Ovary (tissue), 10 donors: ENCODE measurements at regions of chr4 and their contacts with region 1.

Region 1: DNA sequence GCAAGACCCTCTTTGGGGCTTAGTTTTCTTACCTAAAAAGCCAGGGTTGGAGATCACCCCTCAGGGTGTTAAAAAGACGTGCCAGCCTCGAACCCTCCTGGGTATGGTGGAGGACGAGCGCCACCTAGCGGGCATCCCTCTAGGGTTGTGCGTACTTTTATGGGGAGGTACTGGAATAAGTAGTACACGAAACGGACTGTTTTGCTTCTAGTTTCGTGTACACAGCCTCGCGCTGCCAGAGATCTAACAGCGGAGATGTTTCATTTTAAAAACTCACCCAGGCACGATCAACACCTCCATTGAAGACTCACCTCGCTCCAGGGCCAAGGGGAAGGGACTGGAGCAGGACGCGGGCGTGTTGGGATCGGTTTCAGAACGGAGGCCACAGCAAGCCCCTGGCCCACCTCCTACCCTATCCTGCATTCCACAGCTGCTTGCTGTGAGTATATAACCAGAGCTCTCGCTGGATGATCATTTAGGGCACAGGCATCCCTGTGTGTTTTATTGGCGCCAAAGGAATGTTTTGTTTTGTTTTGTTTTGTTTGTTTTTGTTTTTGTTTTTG is 4.8 kb upstream of the NKX3-2 start:
- DNase-seq: peak; percentile 61 to 82 (median 72)
- H3K4me3 ChIP-seq: peak overlapping the region; percentile 15
- H3K27ac ChIP-seq: no peak overlapping the region
- H3K4me1 ChIP-seq: peaks cover 3% of the 10 kb centered on the region
- H3K27me3 ChIP-seq: peaks cover 4% of the 10 kb centered on the region
- CTCF ChIP-seq: peak; percentile 18 to 45 (median 42)
- EP300 ChIP-seq: no peak
- POLR2A ChIP-seq: no peak

Region 2: GRCh38 chr4:12852338-12853307 is 696.4 kb before region 1 on chr4:
- intact Hi-C with region 1: loop called in 2 of 4 experiments (anchors 5 to 10 kb)
- DNase-seq: no peak
- H3K4me3 ChIP-seq: no peak overlapping the region
- H3K27ac ChIP-seq: no peak overlapping the region
- H3K4me1 ChIP-seq: no peaks in the 10 kb centered on the region
- H3K27me3 ChIP-seq: peaks cover 3% of the 10 kb centered on the region
- CTCF ChIP-seq: peak in 1 of 3 donors; percentile 41
- EP300 ChIP-seq: no peak
- POLR2A ChIP-seq: no peak

Region 3: DNA sequence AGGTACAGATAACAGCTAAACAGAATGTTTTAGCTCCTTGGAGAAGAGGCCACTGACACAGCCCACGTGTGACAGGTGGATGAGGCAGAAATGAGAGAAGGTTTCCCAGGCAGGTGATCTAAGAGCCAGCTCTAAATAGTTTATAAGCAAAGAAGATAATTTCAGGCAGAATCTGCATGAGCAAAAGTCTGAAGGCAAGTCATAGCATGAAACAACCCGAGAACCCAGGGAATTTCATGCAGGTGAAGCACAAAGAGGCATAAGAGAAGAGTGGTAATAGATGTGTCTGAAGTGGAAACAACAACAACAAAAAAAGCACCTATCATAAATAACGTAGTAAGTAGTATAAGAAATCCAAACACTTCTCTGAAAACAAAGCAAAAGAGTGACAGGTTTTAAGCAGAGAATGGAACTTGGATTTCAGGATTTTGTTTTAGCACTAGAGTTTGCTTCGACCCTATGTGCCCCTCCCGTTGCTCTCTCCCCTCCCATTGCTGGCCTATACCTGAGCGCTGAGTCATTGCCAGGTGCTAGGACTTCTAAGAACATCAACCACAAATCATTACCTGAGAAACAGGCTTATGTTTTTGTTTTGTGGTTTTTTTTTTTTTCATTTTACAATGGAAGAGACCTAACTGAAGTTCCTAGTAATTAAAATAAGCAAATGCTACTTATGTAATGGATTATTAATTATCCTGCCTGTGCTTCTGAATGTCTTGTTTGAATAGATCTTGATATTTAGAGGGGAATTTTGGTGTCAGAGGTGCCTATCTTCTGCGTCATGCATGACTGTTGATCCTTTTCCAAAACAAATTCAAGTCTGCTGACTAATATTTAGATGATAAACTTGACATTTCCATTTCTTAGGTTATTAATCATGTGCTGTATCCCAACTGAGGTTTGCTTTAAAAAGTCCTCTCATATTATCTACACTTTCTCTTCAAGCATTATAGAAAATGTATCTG is 1177.7 kb after region 1 on chr4:
- intact Hi-C with region 1: no loop called
- DNase-seq: no peak
- H3K4me3 ChIP-seq: no peak overlapping the region
- H3K27ac ChIP-seq: no peak overlapping the region
- H3K4me1 ChIP-seq: no peaks in the 10 kb centered on the region
- H3K27me3 ChIP-seq: no peaks in the 10 kb centered on the region
- CTCF ChIP-seq: no peak
- EP300 ChIP-seq: no peak
- POLR2A ChIP-seq: no peak